Activated CD8-positive, alpha-beta T cell treated with anti-CD3 and anti-CD28 coated beads for 36 hours (primary cell): ENCODE measurements at regions of chr1 and their contacts with region 1.

Region 1: DNA sequence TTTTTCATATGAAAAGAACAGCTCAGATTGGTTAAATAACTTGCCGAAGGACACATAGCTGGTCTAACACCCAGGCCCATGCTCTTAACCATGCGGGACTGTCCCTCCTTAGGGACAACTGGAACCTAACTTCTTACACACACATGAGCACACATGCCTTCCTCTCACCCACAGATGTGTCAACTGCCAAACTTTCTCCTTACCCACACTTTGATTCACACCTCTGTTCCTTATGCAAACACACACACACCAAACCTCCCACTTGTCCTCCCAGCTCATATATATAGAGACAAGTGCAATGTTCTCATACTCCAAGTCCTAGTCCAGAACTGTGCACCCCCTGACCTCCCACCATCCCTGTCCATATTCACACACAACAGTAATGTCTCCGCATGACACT is 4.3 kb downstream of the RAB25 start:
- DNase-seq: no peak
- ATAC-seq: peak; percentile 22
- H3K4me3 Mint-ChIP-seq: no peak overlapping the region
- H3K27ac Mint-ChIP-seq: no peak overlapping the region
- H3K4me1 Mint-ChIP-seq: peaks cover 16% of the 10 kb centered on the region
- H3K27me3 Mint-ChIP-seq: no peaks in the 10 kb centered on the region
- CTCF ChIP-seq: no peak

Region 2: DNA sequence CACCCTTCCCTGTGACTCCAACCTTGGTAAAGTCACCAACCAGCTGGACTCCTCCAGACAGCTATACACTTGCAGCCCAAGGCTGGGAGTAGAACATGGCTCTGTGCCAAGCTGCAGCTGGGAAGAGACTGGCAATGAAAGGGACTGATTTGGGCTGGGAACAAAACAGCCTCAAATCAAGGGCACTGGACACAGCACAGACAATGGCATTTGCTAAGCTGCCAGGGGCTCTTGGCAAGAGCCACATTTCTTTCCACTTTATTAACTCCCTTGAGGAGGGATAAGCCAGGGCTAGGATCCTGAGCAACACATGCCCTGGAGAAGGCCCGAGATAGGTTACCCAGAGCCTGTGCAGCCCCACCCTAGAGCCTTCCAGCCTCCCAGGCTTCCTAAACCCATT is 193.8 kb before region 1 on chr1:
- CTCF ChIA-PET with region 1: no interaction called
- POLR2A ChIA-PET with region 1: no interaction called
- intact Hi-C with region 1: no loop called
- DNase-seq: no peak
- ATAC-seq: no peak
- H3K4me3 Mint-ChIP-seq: no peak overlapping the region
- H3K27ac Mint-ChIP-seq: no peak overlapping the region
- H3K4me1 Mint-ChIP-seq: no peaks in the 10 kb centered on the region
- H3K27me3 Mint-ChIP-seq: no peaks in the 10 kb centered on the region
- CTCF ChIP-seq: no peak

Region 3: DNA sequence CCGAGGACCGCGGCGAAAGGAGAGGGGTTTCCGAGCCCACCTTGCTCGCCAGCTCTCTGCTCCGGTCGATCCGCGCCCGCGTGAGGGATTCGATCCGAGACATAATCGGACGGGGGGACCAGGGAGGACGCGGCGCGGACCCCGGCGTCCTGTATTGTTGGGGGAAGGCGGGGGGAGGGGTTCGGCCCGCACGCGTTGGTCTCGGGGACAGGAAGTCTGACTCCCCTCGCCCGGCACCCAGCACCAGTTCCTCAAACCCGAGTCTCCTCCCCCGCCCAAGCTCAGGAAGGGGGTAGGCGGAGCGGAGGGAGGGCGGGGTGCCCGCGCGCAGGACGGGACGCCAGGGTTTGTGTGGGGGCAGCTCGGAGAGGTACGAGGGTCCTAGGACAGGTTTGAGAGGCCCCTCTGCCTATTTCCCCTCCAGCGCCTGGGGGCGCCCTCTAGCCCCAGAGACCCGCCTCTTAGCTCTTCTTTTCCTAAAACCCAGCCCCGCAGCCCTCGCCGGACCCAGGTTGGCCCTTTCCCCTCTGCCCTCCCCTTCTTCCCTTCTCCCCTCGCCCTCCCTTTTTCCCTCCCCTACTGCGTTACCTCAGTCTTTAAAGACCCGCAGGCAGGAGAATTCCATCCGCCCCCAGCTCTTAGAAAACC is 86.8 kb before region 1 on chr1 and contains the start of gene ARHGEF2:
- CTCF ChIA-PET with region 1: interaction called, 10 read pairs
- POLR2A ChIA-PET with region 1: no interaction called
- intact Hi-C with region 1: no loop called
- DNase-seq: peak; percentile 93
- ATAC-seq: peak; percentile 68
- H3K4me3 Mint-ChIP-seq: peak within 1 kb of the TSS; percentile 98
- H3K27ac Mint-ChIP-seq: peak within 1 kb of the TSS; percentile 94
- H3K4me1 Mint-ChIP-seq: peaks cover 67% of the 10 kb centered on the region
- H3K27me3 Mint-ChIP-seq: no peaks in the 10 kb centered on the region
- CTCF ChIP-seq: peak; percentile 19
- total RNA-seq, gene ARHGEF2: 147 to 150 TPM

Region 4: GRCh38 chr1:156006666-156007376 is 58.4 kb before region 1 on chr1:
- CTCF ChIA-PET with region 1: interaction called, 12 read pairs
- POLR2A ChIA-PET with region 1: interaction called, 6 read pairs
- intact Hi-C with region 1: no loop called
- DNase-seq: no peak
- ATAC-seq: no peak
- H3K4me3 Mint-ChIP-seq: no peak overlapping the region
- H3K27ac Mint-ChIP-seq: peak overlapping the region; percentile 48
- H3K4me1 Mint-ChIP-seq: peaks cover 16% of the 10 kb centered on the region
- H3K27me3 Mint-ChIP-seq: no peaks in the 10 kb centered on the region
- CTCF ChIP-seq: no peak

Region 5: DNA sequence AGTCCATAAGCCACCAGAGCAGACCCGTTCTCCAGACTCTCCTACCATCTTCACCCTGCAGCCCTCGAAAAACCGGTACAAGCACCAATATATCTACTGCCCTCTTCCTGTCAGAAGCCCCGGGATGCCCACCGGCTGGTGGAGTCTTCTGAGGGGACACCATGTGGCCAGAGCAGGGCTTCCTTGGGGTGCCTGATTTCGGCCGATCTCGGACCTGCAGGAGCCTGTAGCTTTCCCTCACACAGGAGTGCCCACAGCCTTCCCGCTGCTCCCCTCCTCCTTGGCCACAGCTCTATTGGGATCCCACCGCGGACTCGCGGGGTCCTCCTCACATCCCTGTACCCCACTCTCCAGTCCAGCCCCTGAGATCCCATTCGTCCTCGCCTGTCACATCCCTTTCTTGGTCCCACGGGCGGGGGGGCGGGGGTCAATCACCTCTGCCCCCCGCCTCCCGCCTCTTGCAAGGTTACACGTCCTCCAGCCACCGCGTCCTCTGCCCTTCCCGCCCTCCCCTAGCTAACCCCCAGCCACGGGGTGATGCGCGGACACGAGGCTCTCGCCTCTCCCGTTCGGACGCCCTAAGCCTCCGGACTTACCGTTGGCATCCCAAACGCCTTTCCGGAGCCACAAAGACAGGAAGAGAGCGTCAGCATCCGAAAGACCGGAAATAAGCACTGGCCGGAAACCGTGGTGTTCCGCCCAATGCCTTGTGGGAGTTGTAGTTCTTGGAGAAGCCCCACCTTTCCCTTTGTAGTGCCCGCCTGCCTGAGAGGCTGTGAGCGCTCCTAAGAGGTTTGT is 44.7 kb before region 1 on chr1 and contains the start of gene SSR2:
- CTCF ChIA-PET with region 1: interaction called, 26 read pairs
- POLR2A ChIA-PET with region 1: interaction called, 3 read pairs
- intact Hi-C with region 1: no loop called
- DNase-seq: peak; percentile 92
- ATAC-seq: peak; percentile 100
- H3K4me3 Mint-ChIP-seq: peak within 1 kb of the TSS; percentile 82
- H3K27ac Mint-ChIP-seq: peak within 1 kb of the TSS; percentile 94
- H3K4me1 Mint-ChIP-seq: peaks cover 22% of the 10 kb centered on the region
- H3K27me3 Mint-ChIP-seq: peaks cover 4% of the 10 kb centered on the region
- CTCF ChIP-seq: no peak
- total RNA-seq, gene SSR2: 148 to 150 TPM

Region 6: GRCh38 chr1:156025877-156026276 is 39.3 kb before region 1 on chr1:
- CTCF ChIA-PET with region 1: interaction called, 26 read pairs
- POLR2A ChIA-PET with region 1: interaction called, 3 read pairs
- intact Hi-C with region 1: no loop called
- DNase-seq: peak; percentile 65
- ATAC-seq: peak; percentile 90
- H3K4me3 Mint-ChIP-seq: no peak overlapping the region
- H3K27ac Mint-ChIP-seq: no peak overlapping the region
- H3K4me1 Mint-ChIP-seq: peaks cover 7% of the 10 kb centered on the region
- H3K27me3 Mint-ChIP-seq: peaks cover 5% of the 10 kb centered on the region
- CTCF ChIP-seq: peak; percentile 46

Region 7: GRCh38 chr1:156054500-156055280 is 10.5 kb before region 1 on chr1 and contains the start of gene LAMTOR2:
- CTCF ChIA-PET with region 1: interaction called, 16 read pairs
- POLR2A ChIA-PET with region 1: interaction called, 3 read pairs
- intact Hi-C with region 1: no loop called
- DNase-seq: peak; percentile 99
- ATAC-seq: peak; percentile 78
- H3K4me3 Mint-ChIP-seq: peak within 1 kb of the TSS; percentile 96
- H3K27ac Mint-ChIP-seq: peak within 1 kb of the TSS; percentile 95
- H3K4me1 Mint-ChIP-seq: peaks cover 22% of the 10 kb centered on the region
- H3K27me3 Mint-ChIP-seq: no peaks in the 10 kb centered on the region
- CTCF ChIP-seq: no peak
- total RNA-seq, gene LAMTOR2: 48.9 to 49.4 TPM